ENCODE measurements at regions of chr2 and their contacts with region 1.

Region 1: DNA sequence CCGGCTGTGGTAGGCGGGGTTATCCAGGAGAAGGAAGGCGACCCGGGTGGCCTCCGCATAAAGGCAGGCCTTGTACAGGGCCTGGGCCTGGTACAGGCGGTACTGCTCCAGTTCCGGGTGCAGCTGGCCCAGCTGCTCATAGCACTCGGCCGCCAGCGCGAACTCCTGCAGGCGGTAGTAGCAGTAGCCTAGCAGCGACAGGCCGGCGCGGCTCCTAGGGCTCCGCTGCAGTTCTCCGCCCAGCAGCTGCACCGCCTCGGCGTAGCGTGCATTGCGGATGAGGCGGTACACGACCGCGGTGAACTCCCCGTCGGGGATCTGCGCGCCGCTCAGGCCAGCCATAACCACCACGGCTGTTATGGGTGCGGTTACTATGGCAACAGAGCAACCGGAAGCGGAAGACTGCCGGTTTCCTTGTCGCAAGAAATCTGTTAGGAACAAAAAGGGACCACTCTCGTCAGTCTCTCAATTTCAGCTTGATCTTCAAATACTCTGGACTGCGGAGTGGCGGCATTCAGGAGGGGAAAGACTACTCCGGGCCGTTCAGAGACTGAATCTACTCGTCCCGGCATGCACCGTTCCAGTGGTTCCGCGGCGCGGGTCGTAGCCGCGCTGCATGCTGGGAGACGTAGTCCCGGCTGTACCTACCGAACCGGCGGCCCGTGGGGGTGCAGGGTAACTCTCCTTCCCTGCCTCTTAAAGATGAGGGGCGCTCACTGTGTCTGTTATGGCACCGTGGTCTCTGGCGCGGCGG is 160.0 kb downstream of the AGPS start:
- DNase-seq: peak; percentile 46 to 92
- H3K4me3 ChIP-seq: peak overlapping the region; percentile 89 to 96
- H3K27ac ChIP-seq: peak overlapping the region; percentile 87 to 95
- H3K4me1 ChIP-seq: peaks cover 0 to 3% of the 10 kb centered on the region in 2 donors
- H3K27me3 ChIP-seq: no peaks in the 10 kb centered on the region
- CTCF ChIP-seq: no peak

Region 2: DNA sequence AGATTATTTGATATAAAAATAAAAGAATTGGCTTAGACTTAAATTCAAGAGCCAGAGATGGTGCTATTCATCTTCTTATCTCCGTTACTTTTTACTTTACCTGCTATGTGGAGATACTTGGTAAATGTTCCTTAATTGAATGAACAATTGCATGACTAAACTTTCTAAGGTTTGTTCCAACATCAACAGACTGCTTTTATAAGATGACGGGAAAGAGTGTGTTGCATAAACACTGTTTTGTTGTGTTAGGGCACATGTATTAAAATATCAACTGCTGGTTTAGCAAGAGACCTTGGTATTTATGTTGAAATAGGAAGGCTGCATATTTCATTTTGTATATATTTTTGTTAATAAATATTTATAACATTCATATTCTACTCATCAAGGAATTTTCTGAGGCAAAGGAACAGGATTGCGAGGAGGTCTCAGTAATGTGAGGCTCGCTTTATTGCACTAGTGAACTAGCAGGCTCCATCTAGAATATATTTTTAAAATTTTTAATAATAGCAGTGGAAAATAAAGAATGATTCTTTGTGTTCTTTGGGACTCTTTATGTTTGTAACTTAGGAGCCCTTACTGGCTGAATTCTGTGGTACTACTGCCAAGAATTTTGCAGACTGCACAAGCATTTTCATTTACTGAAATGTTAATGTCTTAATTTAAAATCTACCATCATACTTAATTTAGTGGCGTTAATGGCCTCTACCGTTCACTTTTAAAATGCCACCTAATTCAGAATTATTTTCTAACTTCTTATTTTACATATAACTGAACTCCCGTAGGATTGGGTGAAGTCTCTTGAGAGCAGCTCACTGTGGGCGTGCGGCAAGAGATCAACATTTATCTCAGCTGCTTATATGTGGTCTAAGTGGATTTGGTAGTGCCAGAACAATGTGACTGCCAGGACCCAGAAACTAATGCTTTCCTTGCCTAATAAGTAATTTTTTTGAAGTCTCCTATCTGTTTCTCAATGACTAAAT is 277.3 kb before region 1 on chr2:
- intact Hi-C with region 1: loop called (anchors 5 kb)
- DNase-seq: no peak
- H3K4me3 ChIP-seq: peak overlapping the region; percentile 27 to 46
- H3K27ac ChIP-seq: peak overlapping the region; percentile 65 to 79
- H3K4me1 ChIP-seq: peaks cover 0 to 21% of the 10 kb centered on the region in 2 donors
- H3K27me3 ChIP-seq: no peaks in the 10 kb centered on the region
- CTCF ChIP-seq: no peak

Region 3: GRCh38 chr2:177530561-177530960 is 22.0 kb before region 1 on chr2:
- intact Hi-C with region 1: no loop called
- DNase-seq: no peak
- H3K4me3 ChIP-seq: no peak overlapping the region
- H3K27ac ChIP-seq: no peak overlapping the region
- H3K4me1 ChIP-seq: no peaks in the 10 kb centered on the region
- H3K27me3 ChIP-seq: no peaks in the 10 kb centered on the region
- CTCF ChIP-seq: no peak

Region 4: DNA sequence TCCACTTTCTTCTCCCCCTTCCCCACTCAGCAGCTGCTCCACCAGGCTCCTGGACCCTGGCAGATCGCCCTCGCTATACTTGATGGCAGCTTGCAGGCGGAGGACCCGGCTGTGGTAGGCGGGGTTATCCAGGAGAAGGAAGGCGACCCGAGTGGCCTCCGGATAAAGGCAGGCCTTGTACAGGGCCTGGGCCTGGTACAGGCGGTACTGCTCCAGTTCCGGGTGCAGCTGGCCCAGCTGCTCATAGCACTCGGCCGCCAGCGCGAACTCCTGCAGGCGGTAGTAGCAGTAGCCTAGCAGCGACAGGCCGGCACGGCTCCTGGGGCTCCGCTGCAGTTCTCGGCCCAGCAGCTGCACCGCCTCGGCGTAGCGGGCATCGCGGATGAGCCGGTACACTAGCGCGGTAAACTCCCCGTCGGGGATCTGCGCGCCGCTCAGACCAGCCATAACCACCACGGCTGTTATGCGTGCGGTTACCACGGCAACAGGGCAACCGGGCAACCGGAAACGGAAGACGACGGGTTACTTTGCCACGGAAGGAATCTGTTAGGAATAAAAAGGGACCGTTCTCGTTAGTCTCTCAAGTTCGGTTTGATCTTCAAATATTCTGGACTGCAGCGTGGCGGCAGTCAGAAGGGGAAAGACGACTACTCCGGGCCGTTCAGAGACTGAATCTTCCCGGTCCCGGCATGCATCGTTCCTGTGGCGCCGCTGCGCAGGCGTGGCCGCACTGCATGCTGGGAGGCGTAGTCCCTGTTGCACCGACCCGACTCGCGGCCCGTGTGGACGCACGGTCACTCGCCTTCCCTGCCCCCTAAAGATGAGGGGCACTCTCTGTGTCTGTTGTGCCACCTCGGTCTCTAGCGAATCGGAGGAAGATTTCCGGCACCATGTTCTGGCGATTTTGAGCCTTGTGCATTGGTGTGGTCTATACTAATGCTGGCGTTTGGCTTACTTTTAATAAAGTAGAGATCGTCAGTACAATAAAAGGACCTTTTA is 66.0 kb after region 1 on chr2:
- intact Hi-C with region 1: loop called (anchors 1 kb)
- DNase-seq: peak; percentile 68 to 95
- H3K4me3 ChIP-seq: peak overlapping the region; percentile 65 to 86
- H3K27ac ChIP-seq: peak overlapping the region; percentile 89 to 96
- H3K4me1 ChIP-seq: no peaks in the 10 kb centered on the region
- H3K27me3 ChIP-seq: no peaks in the 10 kb centered on the region
- CTCF ChIP-seq: no peak